PC-9 (cell line): ENCODE measurements at regions of chr2 and their contacts with region 1.

Region 1: GRCh38 chr2:74458132-74458925 is at the start of gene WBP1:
- DNase-seq: peak; percentile 99 to 100
- H3K4me3 ChIP-seq: peak within 1 kb of the TSS; percentile 93
- H3K27ac ChIP-seq: peak within 1 kb of the TSS; percentile 29; the same call in 1 of the 2 replicates
- H3K4me1 ChIP-seq: peaks cover 22% of the 10 kb centered on the region
- H3K27me3 ChIP-seq: no peaks in the 10 kb centered on the region
- CTCF ChIP-seq: no peak
- total RNA-seq, gene WBP1: 68.0 and 74.7 TPM in 2 replicates

Region 2: DNA sequence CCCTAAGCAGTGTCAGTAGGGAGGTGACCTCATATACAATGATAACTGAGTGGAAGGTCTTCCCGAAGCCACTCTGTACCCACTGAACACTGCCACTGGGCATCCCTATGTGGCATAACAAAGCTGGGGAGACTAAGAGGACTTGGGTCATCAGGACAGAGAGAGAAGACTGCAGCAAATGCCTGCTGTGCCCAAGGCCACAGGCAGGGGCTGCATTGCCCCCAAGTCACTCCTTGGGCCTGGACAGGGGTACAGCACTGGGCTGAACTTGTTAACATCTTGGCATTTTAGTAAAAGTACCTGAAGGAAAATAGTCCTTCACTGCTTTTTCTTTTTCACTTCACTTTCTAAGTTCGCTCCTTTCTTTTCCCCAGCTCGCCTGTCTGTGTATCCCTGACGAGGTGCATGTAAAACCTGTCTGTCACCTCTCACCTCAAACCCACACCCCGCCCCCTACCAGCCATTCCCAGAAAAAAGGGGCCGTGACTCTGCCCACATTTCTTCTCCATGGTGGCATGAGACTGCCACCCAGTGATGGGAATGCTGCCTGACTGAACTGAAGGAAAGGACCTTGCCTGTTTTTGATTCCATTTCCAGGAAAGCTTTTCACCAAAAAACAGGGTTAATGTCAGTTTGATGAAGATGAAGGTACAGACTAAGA is 197.0 kb before region 1 on chr2:
- CTCF ChIA-PET with region 1: no interaction called
- POLR2A ChIA-PET with region 1: no interaction called
- intact Hi-C with region 1: loop called (anchors 10 kb)
- DNase-seq: peak; percentile 72 to 81
- H3K4me3 ChIP-seq: no peak overlapping the region
- H3K27ac ChIP-seq: no peak overlapping the region
- H3K4me1 ChIP-seq: peaks cover 5% of the 10 kb centered on the region
- H3K27me3 ChIP-seq: no peaks in the 10 kb centered on the region
- CTCF ChIP-seq: peak; percentile 81

Region 3: GRCh38 chr2:74632209-74632938 is 174.0 kb after region 1 on chr2:
- CTCF ChIA-PET with region 1: no interaction called
- POLR2A ChIA-PET with region 1: no interaction called
- intact Hi-C with region 1: no loop called
- DNase-seq: peak in 1 of 2 experiments; percentile 44
- H3K4me3 ChIP-seq: no peak overlapping the region
- H3K27ac ChIP-seq: no peak overlapping the region
- H3K4me1 ChIP-seq: peaks cover 11% of the 10 kb centered on the region
- H3K27me3 ChIP-seq: no peaks in the 10 kb centered on the region
- CTCF ChIP-seq: no peak